Gastrocnemius medialis (tissue), 4 donors: ENCODE measurements at regions of chr3 and their contacts with region 1.

Region 1: DNA sequence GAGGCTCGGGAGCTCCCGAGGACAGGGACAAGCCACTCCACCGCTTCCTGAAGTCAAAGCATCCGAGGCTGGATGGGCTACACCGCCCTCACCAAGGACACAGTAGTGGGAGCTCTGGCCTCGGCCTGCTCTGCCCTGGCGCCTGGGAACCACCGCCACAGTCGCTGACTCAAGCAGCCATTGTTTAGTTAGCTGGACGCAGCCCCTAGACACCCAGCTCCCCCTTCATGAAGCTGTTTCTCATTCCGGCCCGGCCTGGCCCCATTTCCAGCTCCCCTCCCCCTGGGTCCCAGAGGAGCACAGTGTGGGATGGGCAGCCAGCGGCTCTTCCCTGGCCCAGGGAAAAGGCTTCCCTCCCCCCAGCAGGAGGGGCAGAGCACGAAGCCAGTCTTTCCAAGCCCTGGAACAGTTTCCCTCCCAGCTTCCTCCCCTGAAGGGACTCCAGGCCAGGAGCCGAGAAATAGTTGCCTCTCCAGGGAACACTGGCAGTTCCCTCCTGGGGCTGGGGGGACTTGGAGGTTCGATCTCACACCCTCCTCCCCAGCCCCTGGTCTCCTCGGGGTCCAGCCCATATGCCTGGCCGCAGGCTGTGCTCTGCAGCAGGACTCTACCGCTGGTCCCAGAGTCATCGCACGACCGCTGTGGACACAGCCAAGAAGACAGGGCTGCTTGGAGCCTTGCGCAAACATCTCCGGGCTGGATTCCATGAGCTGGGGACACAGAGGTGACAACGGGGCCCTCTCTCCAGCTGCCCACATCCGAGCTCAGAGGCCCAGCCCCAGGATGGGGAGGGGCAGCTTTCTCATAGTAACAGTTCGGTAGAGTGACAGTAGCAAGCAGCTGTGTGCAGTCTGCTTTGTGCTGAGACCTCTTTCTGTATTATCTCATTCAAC is 10.0 kb downstream of the PLXND1 start:
- DNase-seq: peak; percentile 88 to 96
- ATAC-seq: peak; percentile 90 to 91
- H3K4me3 ChIP-seq: peak overlapping the region in 3 of 4 donors; percentile 0 to 32 (median 22)
- H3K27ac ChIP-seq: peak overlapping the region; percentile 68 to 86 (median 81)
- H3K4me1 ChIP-seq: peaks cover 70 to 81% of the 10 kb centered on the region in 2 donors
- H3K27me3 ChIP-seq: no peaks in the 10 kb centered on the region
- CTCF ChIP-seq: no peak
- POLR2A ChIP-seq: peak in 1 of 2 donors; percentile 29

Region 2: GRCh38 chr3:129503471-129504291 is 92.8 kb before region 1 on chr3:
- in situ Hi-C with region 1: no loop called
- intact Hi-C with region 1: loop called (anchors 5 kb)
- DNase-seq: no peak
- ATAC-seq: peak in 1 of 2 donors; percentile 5
- H3K4me3 ChIP-seq: no peak overlapping the region
- H3K27ac ChIP-seq: peak overlapping the region; percentile 7 to 82 (median 72)
- H3K4me1 ChIP-seq: peaks cover 64 to 75% of the 10 kb centered on the region in 2 donors
- H3K27me3 ChIP-seq: no peaks in the 10 kb centered on the region
- CTCF ChIP-seq: no peak
- POLR2A ChIP-seq: no peak

Region 3: DNA sequence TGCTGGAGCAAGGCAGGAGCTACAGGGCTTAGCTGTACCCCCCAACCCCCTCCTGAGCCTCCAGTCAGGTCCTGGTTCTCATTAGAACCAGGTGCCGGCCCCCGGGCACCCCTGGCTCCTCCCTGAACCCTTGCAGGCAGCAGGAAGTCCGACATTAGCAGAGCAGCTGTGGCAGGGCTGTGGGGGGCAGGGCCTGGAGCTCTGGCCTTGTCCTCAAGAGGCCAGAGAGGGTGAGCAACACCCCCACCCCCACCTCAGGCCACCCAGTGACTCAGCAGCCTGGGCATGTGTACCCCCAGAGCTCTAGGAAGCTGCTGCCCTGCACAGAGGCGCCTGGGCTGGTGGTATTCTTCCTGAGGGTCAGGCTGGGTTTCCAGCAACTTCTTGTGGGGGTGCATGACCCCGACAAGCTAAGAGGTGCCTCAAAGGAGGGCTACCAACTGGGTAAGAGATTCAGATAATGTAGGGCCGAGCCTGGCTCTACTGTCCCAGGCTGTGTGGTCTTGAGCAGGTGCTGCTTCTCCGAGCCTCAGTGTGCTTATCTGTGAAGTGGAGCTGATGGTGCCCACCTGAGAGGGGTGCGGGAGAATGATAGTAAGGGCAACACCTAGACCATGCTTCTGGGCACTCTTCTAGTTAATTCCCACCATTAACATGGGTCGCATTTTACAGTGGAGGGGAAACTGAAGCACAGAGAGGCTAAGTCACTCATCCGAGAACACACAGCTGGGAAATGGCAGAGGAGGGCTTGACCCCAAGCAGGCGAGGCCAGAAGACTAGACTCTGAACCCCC is 37.5 kb before region 1 on chr3:
- in situ Hi-C with region 1: no loop called
- intact Hi-C with region 1: loop called (anchors 5 kb)
- DNase-seq: no peak
- ATAC-seq: no peak
- H3K4me3 ChIP-seq: no peak overlapping the region
- H3K27ac ChIP-seq: peak overlapping the region in 3 of 4 donors; percentile 3 to 74 (median 70)
- H3K4me1 ChIP-seq: peaks cover 46 to 54% of the 10 kb centered on the region in 2 donors
- H3K27me3 ChIP-seq: no peaks in the 10 kb centered on the region
- CTCF ChIP-seq: no peak
- POLR2A ChIP-seq: no peak

Region 4: DNA sequence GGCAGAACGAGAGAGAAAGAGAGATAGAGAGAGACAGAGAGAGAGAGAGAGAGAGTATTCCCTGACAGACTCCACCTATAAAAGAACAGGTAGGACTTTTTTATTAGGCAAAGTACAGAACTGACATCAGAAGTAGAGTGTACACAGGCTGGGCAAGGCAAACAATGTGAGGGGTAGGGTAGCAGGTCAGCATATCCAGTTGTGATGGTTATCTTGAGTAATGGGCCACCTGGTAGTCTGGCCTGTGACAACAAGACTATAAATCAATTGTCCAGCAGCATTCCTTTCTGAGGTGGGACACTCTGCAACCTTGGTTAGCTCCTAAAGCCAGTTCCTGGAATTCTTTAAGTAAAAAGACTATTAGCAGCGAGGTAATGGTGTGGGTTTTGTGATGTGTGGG is 311.9 kb after region 1 on chr3:
- in situ Hi-C with region 1: no loop called
- intact Hi-C with region 1: no loop called
- DNase-seq: no peak
- ATAC-seq: no peak
- H3K4me3 ChIP-seq: no peak overlapping the region
- H3K27ac ChIP-seq: no peak overlapping the region
- H3K4me1 ChIP-seq: no peaks in the 10 kb centered on the region
- H3K27me3 ChIP-seq: no peaks in the 10 kb centered on the region
- CTCF ChIP-seq: no peak
- POLR2A ChIP-seq: no peak